Heart right ventricle (tissue), 16 donors: ENCODE measurements at regions of chr7 and their contacts with region 1.

Region 1: DNA sequence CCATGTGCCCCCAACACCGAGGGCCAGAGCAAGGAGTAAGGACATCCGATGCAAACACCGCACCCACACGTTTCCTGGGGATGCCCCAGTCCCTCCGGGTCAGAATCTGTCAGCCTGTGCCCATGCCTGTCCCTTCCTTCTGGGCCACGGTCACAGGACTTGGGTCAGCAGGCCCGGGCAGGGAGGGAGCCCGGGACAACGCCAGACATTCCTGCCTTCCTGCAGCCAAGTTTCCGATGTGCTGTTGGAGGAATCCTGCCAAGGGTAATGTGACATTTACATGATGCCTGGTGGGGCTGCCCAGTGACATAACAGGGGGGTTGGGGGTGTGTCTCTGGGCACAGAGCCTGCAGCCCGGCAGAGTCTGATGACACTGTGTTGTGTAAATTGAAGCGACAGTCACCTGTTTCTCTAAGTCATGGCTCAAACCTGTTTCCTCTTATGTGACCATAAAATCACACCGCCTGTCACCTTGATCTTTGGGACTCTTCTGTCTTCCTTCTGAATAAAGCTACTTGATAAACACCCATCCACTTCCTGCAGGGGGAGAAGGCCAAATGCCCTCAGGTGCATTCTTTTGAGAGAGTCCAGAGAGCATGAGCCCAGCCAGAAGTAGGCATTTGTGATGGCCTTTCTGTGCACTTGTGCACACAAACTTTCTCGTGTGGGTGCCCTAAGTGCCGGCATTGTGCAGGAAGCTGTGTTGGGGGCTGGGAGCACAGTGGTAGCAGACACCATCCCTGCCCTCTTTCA is 175.3 kb upstream of the RHEB start:
- DNase-seq: peak; percentile 70 to 84
- ATAC-seq: peak; percentile 80 to 94 (median 86)
- H3K4me3 ChIP-seq: no peak overlapping the region
- H3K27ac ChIP-seq: peak overlapping the region; percentile 56 to 95 (median 82)
- H3K4me1 ChIP-seq: peaks cover 11 to 90% (median 55%) of the 10 kb centered on the region in 9 donors
- H3K27me3 ChIP-seq: no peaks in the 10 kb centered on the region
- CTCF ChIP-seq: no peak

Region 2: GRCh38 chr7:151637781-151638261 is 57.2 kb before region 1 on chr7:
- intact Hi-C with region 1: loop called in 5 of 10 experiments (anchors 2 to 10 kb)
- DNase-seq: peak in 1 of 2 donors; percentile 64
- ATAC-seq: peak; percentile 66 to 90 (median 76)
- H3K4me3 ChIP-seq: no peak overlapping the region
- H3K27ac ChIP-seq: peak overlapping the region; percentile 1 to 84 (median 78)
- H3K4me1 ChIP-seq: peaks cover 0 to 24% (median 16%) of the 10 kb centered on the region in 9 donors
- H3K27me3 ChIP-seq: no peaks in the 10 kb centered on the region
- CTCF ChIP-seq: no peak

Region 3: GRCh38 chr7:151736403-151736909 is 41.5 kb after region 1 on chr7:
- intact Hi-C with region 1: loop called in 2 of 10 experiments (anchors 1 to 5 kb)
- DNase-seq: peak; percentile 58 to 84
- ATAC-seq: peak; percentile 83 to 95 (median 92)
- H3K4me3 ChIP-seq: peak overlapping the region in 9 of 10 donors; percentile 46 to 64 (median 56)
- H3K27ac ChIP-seq: peak overlapping the region; percentile 59 to 98 (median 90)
- H3K4me1 ChIP-seq: peaks cover 5 to 48% (median 16%) of the 10 kb centered on the region in 9 donors
- H3K27me3 ChIP-seq: no peaks in the 10 kb centered on the region
- CTCF ChIP-seq: peak in 3 of 9 donors; percentile 22 to 34 (median 31)